ENCODE measurements at regions of chr13 and their contacts with region 1.

Region 1: GRCh38 chr13:51995677-51996551 is 15.3 kb downstream of the ATP7B start:
- DNase-seq: no peak
- ATAC-seq: peak; percentile 62 to 72
- H3K4me3 ChIP-seq: no peak overlapping the region
- H3K27ac ChIP-seq: peak overlapping the region; percentile 57
- H3K4me1 ChIP-seq: peaks cover 21% of the 10 kb centered on the region
- H3K27me3 ChIP-seq: no peaks in the 10 kb centered on the region
- CTCF ChIP-seq: no peak

Region 2: DNA sequence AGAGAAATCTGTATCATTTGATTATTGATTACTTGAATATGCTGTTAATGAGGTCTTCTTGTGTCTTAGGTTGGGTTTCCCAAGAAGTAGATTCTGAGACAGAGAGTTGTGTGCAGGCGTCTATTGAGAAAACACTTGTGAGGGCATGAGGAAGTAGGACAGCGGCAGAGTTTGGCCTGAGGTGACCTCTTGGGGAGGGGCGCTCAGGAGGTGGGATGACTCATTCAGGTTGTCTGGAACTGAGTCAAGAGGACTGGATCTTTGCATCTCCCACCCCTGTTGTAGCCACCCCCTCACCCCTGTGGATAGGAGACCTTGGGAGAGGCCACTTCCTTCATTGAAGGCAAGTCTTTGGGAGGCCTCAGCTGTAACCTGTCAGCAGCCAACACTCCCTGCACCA is 446.9 kb before region 1 on chr13:
- intact Hi-C with region 1: no loop called
- DNase-seq: peak; percentile 65
- ATAC-seq: peak; percentile 80 to 81
- H3K4me3 ChIP-seq: no peak overlapping the region
- H3K27ac ChIP-seq: no peak overlapping the region
- H3K4me1 ChIP-seq: peaks cover 4% of the 10 kb centered on the region
- H3K27me3 ChIP-seq: no peaks in the 10 kb centered on the region
- CTCF ChIP-seq: no peak

Region 3: DNA sequence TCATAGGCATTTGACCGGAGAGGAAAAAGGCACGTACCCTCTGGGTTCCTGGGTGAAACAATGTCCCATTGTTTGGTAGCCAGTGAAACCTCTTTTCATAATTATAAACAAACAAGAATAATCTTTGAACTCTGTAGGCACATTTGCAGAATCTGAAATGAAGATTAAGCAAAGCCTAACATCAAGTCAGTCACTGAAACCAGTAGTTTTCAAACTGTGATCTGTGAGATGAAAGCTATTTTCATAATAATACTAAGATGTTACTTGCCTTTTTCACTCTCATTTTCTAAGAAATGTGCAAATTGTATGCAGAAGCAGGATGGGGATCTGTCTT is 306.3 kb before region 1 on chr13:
- intact Hi-C with region 1: no loop called
- DNase-seq: no peak
- ATAC-seq: no peak
- H3K4me3 ChIP-seq: no peak overlapping the region
- H3K27ac ChIP-seq: no peak overlapping the region
- H3K4me1 ChIP-seq: no peaks in the 10 kb centered on the region
- H3K27me3 ChIP-seq: no peaks in the 10 kb centered on the region
- CTCF ChIP-seq: no peak

Region 4: GRCh38 chr13:52128714-52129700 is 133.1 kb after region 1 on chr13 and contains the start of gene NEK5:
- intact Hi-C with region 1: loop called (anchors 10 kb)
- DNase-seq: peak; percentile 79
- ATAC-seq: peak; percentile 93 to 95
- H3K4me3 ChIP-seq: peak within 1 kb of the TSS; percentile 76
- H3K27ac ChIP-seq: no peak within 1 kb of the TSS
- H3K4me1 ChIP-seq: peaks cover 18% of the 10 kb centered on the region
- H3K27me3 ChIP-seq: no peaks in the 10 kb centered on the region
- CTCF ChIP-seq: peak; percentile 82
- total RNA-seq, gene NEK5: 4.1 TPM